ENCODE measurements at regions of chr12 and their contacts with region 1.

Region 1: GRCh38 chr12:34022079-34022830 is at the start of gene ALG10:
- DNase-seq: peak; percentile 82
- H3K4me3 ChIP-seq: peak within 1 kb of the TSS; percentile 52
- H3K27me3 ChIP-seq: no peaks in the 10 kb centered on the region
- CTCF ChIP-seq: peak; percentile 64
- polyA plus RNA-seq, gene ALG10: 5.9 and 8.7 TPM in 2 replicates

Region 2: GRCh38 chr12:32743264-32743663 is 1279.0 kb before region 1 on chr12:
- CTCF ChIA-PET with region 1: no interaction called
- POLR2A ChIA-PET with region 1: interaction called, 12 read pairs
- DNase-seq: no peak
- H3K4me3 ChIP-seq: no peak overlapping the region
- H3K27me3 ChIP-seq: no peaks in the 10 kb centered on the region
- CTCF ChIP-seq: no peak

Region 3: DNA sequence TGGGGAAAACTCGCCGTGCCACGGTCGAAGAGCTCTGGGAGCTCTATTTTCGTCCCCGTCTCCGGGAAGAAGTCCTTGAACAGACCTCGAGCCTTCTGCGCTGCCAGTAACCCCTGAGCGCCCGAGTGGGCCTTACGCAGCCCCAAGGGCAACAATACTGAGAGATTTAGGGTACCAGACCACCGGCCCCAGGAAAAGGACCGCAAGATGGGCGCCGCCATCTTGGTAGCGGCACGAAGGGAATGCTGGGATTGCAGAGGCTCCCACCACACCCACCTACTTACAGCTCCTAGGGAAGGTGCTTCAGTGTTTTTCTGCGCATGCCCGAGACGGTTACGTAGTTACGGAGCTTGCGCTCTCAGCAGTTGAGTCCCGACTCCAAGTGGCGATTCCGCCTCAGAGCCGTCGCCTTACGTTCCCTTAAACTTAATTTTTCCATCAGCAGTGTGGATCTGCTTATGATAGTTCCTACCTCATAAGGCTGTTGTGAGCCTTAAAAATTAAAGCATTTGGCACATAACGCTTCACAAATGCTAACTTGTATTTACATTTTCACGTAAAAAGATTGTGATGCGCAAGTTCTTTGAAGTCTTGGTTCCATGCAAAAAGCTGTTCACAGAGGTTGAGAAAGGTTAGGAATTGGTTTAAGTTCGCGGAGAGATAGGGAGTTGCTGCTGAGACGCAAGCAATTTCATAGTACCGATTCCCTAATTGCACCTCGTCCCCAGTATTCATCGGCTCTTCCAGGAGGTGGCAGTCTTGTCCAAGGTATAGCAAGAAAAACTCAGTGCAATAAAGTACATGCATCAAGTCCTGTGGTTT is 1266.4 kb before region 1 on chr12 and contains the start of gene YARS2:
- CTCF ChIA-PET with region 1: interaction called, 57 read pairs
- POLR2A ChIA-PET with region 1: interaction called, 15 read pairs
- DNase-seq: peak; percentile 91
- H3K4me3 ChIP-seq: peak within 1 kb of the TSS; percentile 88
- H3K27me3 ChIP-seq: no peaks in the 10 kb centered on the region
- CTCF ChIP-seq: peak; percentile 71
- polyA plus RNA-seq, gene YARS2: 19.0 TPM in 2 replicates

Measured in BJ (cell line).